GM10248 (cell line): ENCODE measurements at regions of chr2 and their contacts with region 1.

Region 1: DNA sequence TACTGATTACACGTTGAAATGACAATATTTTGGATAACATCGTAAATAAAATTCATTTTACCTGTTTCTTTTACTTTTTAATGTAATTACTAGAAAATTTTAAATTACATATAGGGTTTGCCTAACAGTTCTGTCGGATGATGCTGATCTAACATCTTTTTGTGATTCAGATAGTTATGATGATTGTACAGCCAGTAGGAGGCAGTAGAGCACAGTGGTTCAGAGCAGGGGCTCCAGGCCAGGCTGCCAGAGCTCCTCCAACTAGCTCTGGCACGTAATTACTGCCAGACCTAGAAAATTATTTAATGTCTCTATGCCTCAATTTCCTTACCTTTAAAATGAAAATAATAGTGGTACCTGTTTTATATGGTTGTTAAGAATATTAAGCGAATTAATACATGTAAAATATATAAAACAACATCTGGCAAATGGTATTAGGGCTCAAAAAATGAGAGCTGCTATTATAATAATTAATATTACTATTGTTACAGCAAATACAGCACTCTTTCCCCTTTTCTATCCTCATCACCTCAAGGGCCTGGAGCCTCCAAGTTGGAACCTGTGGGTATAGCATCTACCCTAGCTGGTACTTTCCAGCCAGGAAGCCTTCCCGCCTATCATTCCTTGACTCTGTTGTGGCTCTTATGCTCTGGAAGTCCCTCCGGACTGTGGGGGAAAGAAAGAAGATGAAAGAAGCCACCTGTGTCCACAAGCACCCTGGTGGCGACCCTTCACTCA is 47.7 kb upstream of the PLA2R1 start:
- DNase-seq: peak; percentile 52
- CTCF ChIP-seq: peak; percentile 70

Region 2: GRCh38 chr2:160087854-160088745 is 22.0 kb before region 1 on chr2:
- CTCF ChIA-PET with region 1: interaction called, 15 read pairs
- POLR2A ChIA-PET with region 1: no interaction called
- DNase-seq: no peak
- CTCF ChIP-seq: peak; percentile 20

Region 3: DNA sequence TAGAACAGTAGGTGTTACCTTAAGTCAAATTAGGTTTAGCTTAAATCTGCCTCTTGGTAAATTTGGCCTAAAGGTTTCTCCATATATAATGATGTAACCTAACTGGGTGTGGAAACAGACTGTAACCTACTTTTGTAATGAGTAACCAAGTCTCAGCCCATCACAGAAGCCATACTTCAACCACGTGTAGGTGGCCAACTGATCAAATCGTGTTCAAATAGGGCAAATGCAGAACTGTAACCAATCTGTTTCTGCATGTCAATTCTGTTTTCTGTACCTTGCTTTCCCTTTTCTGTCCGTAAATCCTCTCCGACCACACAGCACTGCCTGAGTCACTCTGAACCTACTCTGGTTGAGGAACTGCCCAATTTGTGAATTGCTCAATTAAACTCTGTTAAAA is 13.7 kb before region 1 on chr2:
- CTCF ChIA-PET with region 1: interaction called, 22 read pairs
- POLR2A ChIA-PET with region 1: no interaction called
- DNase-seq: no peak
- CTCF ChIP-seq: no peak

Region 4: GRCh38 chr2:160125828-160126227 is 15.7 kb after region 1 on chr2:
- CTCF ChIA-PET with region 1: interaction called, 23 read pairs
- POLR2A ChIA-PET with region 1: no interaction called
- DNase-seq: no peak
- CTCF ChIP-seq: no peak

Region 5: DNA sequence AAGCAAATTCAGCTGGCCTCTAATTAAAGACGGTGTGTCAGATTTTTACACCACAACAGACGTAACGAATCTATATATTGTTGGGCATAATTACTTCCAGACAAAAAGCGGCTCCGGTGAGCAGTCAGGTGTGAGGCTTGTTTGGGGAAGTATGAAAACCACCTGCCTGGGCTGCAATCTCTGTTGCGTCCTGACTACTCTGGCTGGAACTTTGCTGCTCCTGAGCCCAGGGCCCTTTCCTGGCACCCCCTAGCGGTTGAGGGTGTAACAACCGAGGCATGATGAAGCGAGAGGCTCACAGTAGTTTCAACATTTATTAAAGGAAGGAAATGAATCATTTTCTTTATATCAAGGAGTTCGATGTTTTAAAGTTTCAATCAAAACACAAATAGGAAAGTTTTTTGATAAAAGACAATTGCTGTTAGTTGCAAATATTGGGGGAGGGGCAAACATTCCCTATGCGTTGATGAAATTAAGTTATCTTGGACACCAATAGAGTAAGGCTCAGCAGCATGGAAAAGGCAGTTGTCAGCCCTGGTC is 100.6 kb after region 1 on chr2:
- CTCF ChIA-PET with region 1: interaction called, 53 read pairs
- POLR2A ChIA-PET with region 1: no interaction called
- DNase-seq: peak; percentile 77
- CTCF ChIP-seq: peak; percentile 88

Region 6: DNA sequence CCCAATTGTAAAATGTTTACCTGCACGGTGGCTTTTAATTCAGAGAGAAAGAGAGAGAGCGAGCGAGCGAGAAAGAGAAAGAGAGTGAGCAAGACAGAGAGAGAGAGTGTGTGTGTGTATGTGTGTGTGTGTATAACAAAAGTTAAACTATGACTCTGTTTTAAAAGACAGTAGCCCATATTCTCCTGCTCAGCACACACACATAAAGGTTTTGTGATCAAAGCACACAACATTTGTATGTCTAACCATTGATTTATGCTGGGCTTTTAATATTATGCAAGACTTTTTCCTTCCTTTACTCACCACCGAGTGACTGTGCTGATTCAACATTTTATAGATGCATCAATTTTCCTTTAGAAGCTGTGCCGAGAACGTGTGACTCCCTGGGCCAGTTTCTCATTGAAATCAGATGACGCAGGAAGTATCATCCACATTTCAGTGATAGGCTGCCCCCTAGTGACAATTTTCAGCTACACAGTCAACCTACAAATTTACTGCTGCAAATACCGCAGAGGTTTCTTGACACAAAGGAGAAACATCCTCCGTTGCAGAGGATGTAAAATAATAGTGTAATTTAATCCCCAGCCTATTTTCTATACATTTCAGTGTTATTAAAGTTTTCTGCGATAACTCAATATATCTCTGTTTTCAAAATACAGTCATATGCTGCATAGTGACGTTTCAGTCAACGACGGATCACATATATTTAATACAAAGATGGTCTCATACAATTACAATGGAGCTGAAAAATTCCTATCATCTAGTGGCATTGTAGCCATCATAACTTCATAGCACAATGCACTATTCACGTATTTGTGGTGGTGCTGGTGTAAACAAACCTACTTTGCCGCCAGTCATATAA is 884.3 kb after region 1 on chr2:
- CTCF ChIA-PET with region 1: interaction called, 11 read pairs
- POLR2A ChIA-PET with region 1: no interaction called
- DNase-seq: peak; percentile 46
- CTCF ChIP-seq: peak; percentile 81